ENCODE measurements at regions of chr10 and their contacts with region 1.

Region 1: DNA sequence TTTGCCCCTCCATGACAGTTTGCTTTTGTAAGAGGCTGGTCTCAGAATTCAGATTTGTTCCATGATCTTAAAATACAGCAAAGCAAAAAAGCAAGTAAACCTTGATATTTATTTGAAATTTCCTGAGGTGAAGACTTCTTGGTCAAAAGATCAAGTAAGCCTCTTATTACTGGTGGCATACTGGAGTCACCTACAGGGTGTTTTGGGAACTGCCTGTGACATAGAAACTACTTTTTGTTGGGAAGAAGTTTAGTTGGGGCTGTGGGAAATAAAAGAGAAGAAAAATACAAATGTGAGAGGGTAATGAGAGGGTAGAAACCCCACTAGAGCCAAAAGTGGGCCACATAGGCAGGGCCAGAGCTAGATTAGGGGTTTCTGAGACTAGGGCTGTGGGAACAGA is 217.9 kb downstream of the OTUD1 start:
- DNase-seq: peak; percentile 16
- H3K4me3 Mint-ChIP-seq: no peak overlapping the region
- H3K27ac Mint-ChIP-seq: no peak overlapping the region
- H3K4me1 Mint-ChIP-seq: peaks cover 2% of the 10 kb centered on the region
- H3K27me3 Mint-ChIP-seq: peaks cover 4% of the 10 kb centered on the region

Region 2: DNA sequence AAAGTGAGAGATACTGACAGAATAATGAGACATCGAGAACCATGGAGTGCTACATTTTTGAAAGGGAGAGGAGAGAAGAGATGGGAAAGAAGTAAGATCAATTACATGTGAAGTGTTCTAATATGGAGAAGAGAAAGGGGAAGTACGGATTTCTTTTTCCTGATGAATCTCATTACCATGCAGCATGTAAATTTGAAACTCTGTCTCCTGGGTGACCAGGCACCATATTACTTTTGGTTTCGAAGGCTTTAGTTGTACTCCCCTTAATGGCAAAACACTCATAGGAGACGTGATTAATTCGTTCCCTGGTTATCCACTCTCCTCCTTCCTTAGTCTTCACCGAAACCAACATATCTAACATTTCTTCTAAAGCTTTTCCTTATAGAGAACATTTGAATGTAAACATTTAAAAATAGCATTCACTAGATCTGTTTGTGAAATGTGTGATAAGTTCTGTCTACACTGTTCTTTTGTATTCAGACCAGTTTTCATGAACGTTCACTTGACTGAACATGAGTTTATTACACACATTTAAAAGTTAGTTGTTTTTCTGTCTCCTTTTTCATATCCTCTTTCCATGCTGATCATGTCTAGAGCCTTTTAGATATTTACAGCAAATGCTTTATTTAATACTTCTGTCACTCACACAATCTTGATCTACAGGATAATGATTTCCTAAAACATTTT is 641.6 kb before region 1 on chr10:
- CTCF ChIA-PET with region 1: no interaction called
- intact Hi-C with region 1: no loop called
- DNase-seq: no peak
- H3K4me3 Mint-ChIP-seq: no peak overlapping the region
- H3K27ac Mint-ChIP-seq: no peak overlapping the region
- H3K4me1 Mint-ChIP-seq: no peaks in the 10 kb centered on the region
- H3K27me3 Mint-ChIP-seq: peaks cover 7% of the 10 kb centered on the region

Region 3: DNA sequence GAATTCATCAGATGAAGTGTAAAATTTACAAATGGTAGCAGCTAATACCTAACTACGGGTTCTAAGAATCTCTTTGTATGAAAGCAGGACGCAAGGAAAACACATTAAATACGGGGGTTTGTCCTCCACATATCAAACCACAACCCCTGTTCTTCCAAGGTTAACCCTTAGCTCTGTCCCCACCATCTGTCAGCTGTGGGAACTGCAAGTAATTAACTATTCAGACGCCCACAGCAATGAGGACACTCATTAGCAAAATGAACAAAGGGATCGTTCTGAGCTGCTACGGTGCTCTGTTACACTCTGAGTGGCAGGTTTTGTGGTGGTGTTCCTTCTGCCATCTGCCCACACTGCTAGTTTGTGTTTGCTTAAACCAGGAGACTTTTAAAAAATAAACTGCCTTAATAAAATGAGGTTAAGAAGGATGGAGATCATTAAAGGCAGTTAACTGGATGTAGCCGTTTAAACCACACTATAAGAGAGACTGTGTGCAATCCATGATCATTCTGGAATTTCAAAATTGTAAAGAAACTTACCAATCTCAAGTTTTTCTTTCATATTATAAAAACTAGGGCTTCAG is 363.5 kb before region 1 on chr10:
- CTCF ChIA-PET with region 1: interaction called, 3 read pairs
- intact Hi-C with region 1: loop called (anchors 2 kb)
- DNase-seq: peak; percentile 71
- H3K4me3 Mint-ChIP-seq: no peak overlapping the region
- H3K27ac Mint-ChIP-seq: no peak overlapping the region
- H3K4me1 Mint-ChIP-seq: peaks cover 2% of the 10 kb centered on the region
- H3K27me3 Mint-ChIP-seq: peaks cover 14% of the 10 kb centered on the region

Region 4: GRCh38 chr10:23314835-23315239 is 341.9 kb before region 1 on chr10:
- CTCF ChIA-PET with region 1: interaction called, 3 read pairs
- intact Hi-C with region 1: loop called (anchors 1 kb)
- DNase-seq: peak; percentile 71
- H3K4me3 Mint-ChIP-seq: no peak overlapping the region
- H3K27ac Mint-ChIP-seq: no peak overlapping the region
- H3K4me1 Mint-ChIP-seq: peaks cover 4% of the 10 kb centered on the region
- H3K27me3 Mint-ChIP-seq: no peaks in the 10 kb centered on the region

Region 5: DNA sequence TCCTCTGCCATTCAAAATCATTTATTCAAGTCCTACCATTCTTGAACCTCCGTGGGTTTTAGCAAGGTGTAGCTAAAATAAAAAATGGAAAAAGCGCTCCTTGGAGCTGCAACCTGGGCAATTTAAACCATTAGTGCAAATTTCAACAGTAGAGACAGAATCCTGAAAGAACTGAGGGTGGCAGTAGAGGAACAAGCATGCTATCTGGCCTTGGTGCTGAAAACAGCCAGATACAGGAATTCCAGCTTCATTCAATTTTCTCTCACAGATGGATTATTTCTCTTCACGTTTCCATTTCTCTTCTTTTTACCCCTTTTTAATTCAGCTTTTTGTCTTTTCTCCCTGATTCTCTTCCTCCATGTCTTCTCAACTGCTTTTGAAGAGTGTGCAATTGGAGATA is 140.2 kb before region 1 on chr10:
- CTCF ChIA-PET with region 1: interaction called, 3 read pairs
- intact Hi-C with region 1: loop called (anchors 1 kb)
- DNase-seq: no peak
- H3K4me3 Mint-ChIP-seq: no peak overlapping the region
- H3K27ac Mint-ChIP-seq: no peak overlapping the region
- H3K4me1 Mint-ChIP-seq: peaks cover 8% of the 10 kb centered on the region
- H3K27me3 Mint-ChIP-seq: no peaks in the 10 kb centered on the region

Region 6: DNA sequence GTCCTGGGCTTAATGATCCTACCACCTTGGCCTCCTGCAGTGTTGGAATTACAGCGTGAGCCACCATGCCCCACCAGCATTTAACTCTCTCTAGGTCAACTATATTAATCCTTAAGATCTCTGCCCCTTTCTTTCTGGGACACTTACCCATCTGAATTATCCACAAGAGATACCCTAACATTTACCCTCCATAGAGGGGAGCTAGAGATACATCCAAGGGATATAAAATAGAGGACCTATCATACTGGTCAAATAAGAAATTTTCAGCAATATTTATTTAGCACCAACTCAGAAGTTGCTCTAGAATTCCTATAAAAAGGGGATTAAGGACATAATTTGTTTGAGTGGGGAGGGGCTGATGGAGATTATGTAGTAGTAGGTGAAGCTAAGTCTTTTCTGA is 121.4 kb before region 1 on chr10:
- CTCF ChIA-PET with region 1: no interaction called
- intact Hi-C with region 1: loop called (anchors 1 kb)
- DNase-seq: no peak
- H3K4me3 Mint-ChIP-seq: peak overlapping the region; percentile 14
- H3K27ac Mint-ChIP-seq: peak overlapping the region; percentile 72
- H3K4me1 Mint-ChIP-seq: peaks cover 77% of the 10 kb centered on the region
- H3K27me3 Mint-ChIP-seq: no peaks in the 10 kb centered on the region

Region 7: DNA sequence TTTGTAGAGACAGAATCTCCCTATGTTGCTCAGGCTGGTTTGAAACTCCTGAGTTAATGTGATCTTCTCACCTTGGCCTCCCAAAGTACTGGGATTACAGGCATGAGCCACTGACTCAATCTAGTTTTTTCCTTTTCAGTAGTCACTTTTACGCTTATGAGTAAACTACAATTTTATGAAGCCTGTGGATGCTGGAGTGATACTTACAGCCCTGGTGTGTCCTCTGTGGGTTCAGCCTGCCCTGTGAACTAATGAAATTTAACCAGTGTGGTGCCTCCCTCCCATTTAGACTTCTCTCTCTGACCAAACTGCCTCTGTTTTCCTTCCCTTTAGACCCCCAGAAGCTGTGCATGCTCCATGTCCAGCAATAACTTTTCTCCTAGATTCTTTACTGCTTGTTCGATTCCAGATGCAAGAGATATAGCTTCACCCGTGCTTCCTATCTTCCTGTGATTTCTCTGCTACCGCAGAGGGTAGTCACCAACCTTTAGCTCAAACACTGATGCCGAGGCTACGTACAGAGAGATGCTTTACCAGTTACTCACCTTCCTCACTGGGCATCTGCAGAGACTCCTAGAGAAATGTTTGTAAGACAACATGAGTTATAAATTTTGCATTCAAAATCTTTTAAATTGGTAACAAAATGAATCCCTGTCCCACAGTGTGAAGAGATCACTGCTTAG is 643.0 kb after region 1 on chr10:
- CTCF ChIA-PET with region 1: no interaction called
- intact Hi-C with region 1: no loop called
- DNase-seq: no peak
- H3K4me3 Mint-ChIP-seq: no peak overlapping the region
- H3K27ac Mint-ChIP-seq: no peak overlapping the region
- H3K4me1 Mint-ChIP-seq: no peaks in the 10 kb centered on the region
- H3K27me3 Mint-ChIP-seq: peaks cover 10% of the 10 kb centered on the region

Measured in activated naive CD4-positive, alpha-beta T cell treated with anti-CD3 and anti-CD28 coated beads for 36 hours (primary cell).